ENCODE measurements at regions of chr12 and their contacts with region 1.

Region 1: DNA sequence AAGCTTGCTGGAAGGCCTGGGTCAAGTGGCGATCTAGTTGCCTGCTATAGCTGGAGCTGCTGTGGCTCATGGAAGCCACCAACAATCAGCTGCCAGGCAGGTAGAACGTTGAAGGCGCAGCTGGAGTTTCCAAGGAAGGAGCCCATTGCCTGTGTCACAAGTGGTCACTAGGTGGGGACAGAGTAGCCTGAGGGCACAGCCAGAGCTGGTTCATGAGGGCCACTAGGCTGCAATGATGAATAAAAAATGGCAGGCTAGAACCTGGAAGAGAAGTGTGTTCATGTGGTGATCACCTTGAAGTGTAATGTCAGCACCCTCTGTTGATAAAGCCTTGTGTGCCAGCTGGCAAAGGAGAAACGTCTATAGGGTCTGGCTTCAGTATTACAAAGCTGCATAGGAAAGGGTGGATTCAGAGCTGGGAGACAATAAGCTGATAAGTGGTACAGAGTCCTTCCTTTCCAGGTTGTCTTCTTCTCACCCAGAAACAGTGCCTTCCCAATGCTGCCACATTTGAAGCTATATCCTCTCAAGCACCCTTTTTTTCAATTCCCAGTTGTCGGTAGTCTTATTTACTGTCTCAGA is 165.8 kb downstream of the EMP1 start:
- DNase-seq: no peak
- H3K4me3 ChIP-seq: no peak overlapping the region
- CTCF ChIP-seq: peak; percentile 80

Region 2: DNA sequence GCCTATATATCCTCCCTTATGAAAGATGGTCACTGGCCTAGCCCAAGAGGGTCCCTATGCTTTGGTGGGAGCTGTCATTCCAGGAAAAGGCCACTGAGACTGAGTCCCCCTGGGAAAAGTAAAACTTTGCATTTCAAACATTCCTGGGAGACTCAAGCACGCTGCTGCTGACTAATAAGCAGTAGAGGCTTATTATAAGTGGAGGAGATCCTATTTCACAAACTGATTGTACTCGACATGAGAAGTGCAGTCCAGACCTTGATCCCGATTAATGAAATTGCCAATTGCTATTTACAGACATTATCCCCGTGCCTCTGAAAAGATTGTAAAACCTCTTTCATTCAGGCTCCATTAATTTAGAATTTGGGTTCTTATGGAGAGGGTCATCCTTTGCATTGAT is 69.3 kb before region 1 on chr12:
- CTCF ChIA-PET with region 1: no interaction called
- POLR2A ChIA-PET with region 1: no interaction called
- DNase-seq: no peak
- H3K4me3 ChIP-seq: no peak overlapping the region
- CTCF ChIP-seq: no peak

Region 3: GRCh38 chr12:13347241-13348043 is 14.9 kb before region 1 on chr12:
- CTCF ChIA-PET with region 1: interaction called, 12 read pairs
- POLR2A ChIA-PET with region 1: no interaction called
- DNase-seq: peak; percentile 59
- H3K4me3 ChIP-seq: 0 out of 2 replicates have a peak overlapping the region, but pooled peaks have one; percentile 26
- CTCF ChIP-seq: peak; percentile 18

Measured in AG04449 (cell line).